Sciatic nerve (tissue), 2 donors: ENCODE measurements at regions of chr17 and their contacts with region 1.

Region 1: DNA sequence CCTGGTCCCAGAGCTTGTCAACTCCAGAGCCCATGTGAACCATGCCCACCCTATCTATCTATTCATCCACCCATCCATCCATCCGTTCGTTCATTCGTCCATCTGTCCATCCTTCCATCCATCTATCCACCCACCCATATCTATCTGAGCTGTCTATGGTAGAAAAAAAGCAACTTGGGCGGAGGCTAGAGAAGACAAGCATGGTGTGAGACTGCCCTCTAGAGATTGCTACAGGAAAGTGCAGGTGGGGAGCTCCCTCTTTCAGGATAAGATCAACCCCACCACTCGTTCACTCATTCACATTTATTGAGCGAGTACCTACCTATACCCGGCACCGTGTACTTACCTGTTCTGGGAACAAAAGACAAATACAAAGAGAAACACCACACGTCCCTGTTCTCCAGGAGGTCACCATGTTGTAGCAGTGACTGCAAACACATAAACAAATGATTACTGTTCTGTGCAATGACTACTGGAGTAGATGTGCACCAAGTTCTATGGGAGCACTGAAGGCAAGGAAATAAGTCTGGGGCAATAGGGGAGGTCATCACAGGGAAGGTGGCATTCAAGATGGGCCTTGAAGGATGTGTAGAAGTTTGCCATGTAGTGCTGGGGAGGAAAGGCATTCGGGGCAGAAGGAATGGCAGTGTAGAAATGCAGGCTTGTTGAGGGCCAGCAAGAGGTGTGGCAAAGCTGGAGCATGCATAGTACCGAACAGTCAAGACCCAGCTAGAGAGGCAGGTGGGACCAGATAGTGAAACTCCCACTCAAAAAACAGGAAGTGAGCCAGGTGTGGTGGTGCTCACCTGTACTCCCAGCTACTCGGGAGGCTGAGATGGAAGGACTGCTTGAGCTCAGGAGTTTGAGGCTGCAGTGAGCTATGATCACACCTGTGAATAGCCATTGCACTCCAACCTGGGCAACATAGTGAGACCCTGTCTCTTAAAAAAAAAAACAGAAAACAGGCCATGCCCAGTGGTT is 13.4 kb upstream of the ATP5MC1 start:
- DNase-seq: no peak
- ATAC-seq: peak; percentile 87

Region 2: DNA sequence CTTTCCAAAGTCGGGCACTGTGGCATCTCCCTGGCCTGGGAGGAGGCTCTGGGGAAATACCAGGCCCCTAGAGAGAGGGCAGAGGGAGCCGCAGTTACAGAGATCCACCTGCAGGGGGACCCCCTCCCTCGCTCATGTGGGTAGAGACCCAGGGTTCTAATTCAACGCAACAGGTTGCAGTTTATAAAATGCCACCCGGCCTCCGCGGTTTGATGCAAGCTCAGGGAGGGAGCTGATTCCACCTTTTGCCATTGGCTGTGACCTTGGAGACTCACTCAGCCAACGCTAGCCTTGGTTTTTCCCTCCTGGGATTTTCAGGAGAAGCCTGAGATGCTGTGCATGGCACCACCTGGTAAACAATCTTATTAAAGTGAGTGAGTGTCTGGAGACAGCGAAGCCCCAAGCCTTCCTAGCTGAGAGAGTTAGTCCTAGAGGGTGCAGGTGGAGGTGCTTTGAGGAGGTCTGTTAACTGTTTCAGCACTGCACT is 74.2 kb before region 1 on chr17:
- intact Hi-C with region 1: loop called (anchors 5 kb)
- DNase-seq: peak; percentile 80
- ATAC-seq: peak; percentile 87

Region 3: GRCh38 chr17:48814504-48814903 is 64.7 kb before region 1 on chr17:
- intact Hi-C with region 1: loop called (anchors 5 kb)
- DNase-seq: peak; percentile 72
- ATAC-seq: no peak

Region 4: GRCh38 chr17:49016788-49017463 is 137.7 kb after region 1 on chr17:
- intact Hi-C with region 1: loop called (anchors 10 kb)
- DNase-seq: no peak
- ATAC-seq: peak; percentile 17